ENCODE measurements at regions of chr6 and their contacts with region 1.

Region 1: GRCh38 chr6:31087494-31088089 is 24.8 kb downstream of the C6orf15 start:
- DNase-seq: peak; percentile 64 to 94 (median 82)
- ATAC-seq: peak; percentile 97 to 99 (median 98)
- H3K4me3 ChIP-seq: no peak overlapping the region
- H3K27ac ChIP-seq: no peak overlapping the region
- H3K4me1 ChIP-seq: no peaks in the 10 kb centered on the region
- H3K27me3 ChIP-seq: no peaks in the 10 kb centered on the region
- CTCF ChIP-seq: peak; percentile 61 to 76 (median 74)

Region 2: GRCh38 chr6:30821862-30822782 is 265.5 kb before region 1 on chr6:
- intact Hi-C with region 1: loop called in 2 of 3 experiments (anchors 5 to 10 kb)
- DNase-seq: no peak
- ATAC-seq: peak; percentile 44 to 75 (median 64)
- H3K4me3 ChIP-seq: no peak overlapping the region
- H3K27ac ChIP-seq: no peak overlapping the region
- H3K4me1 ChIP-seq: peaks cover 0 to 8% (median 4%) of the 10 kb centered on the region in 3 donors
- H3K27me3 ChIP-seq: no peaks in the 10 kb centered on the region
- CTCF ChIP-seq: peak; percentile 16 to 31 (median 28)